GM10248 (cell line): ENCODE measurements at regions of chr11 and their contacts with region 1.

Region 1: GRCh38 chr11:120489799-120490198 is 21.7 kb upstream of the GRIK4 start:
- DNase-seq: no peak
- CTCF ChIP-seq: no peak

Region 2: DNA sequence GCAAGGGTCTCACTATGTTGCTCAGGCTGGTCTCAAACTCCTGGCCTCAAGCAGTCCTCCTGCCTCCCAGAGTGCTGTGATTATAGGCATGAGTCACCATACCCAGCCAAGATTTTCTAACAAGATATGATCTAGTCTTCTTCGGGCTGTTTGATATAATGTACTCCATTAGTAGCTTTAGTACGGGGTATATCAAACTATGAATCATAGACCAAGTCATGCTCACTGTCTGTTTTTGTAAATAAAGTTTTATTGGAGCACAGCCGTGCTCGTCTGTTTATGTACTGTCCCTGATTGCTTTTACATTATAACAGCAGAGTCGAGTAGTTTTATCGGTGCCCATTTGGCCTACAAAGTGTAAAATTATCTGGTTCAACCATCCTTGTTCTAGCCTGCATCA is 22.2 kb before region 1 on chr11:
- CTCF ChIA-PET with region 1: interaction called, 10 read pairs
- POLR2A ChIA-PET with region 1: no interaction called
- DNase-seq: no peak
- CTCF ChIP-seq: no peak